IMR-90 (cell line): ENCODE measurements at regions of chr7 and their contacts with region 1.

Region 1: GRCh38 chr7:22776964-22777363 is 45.7 kb downstream of the TOMM7 start:
- DNase-seq: no peak
- ATAC-seq: no peak
- H3K4me3 ChIP-seq: no peak overlapping the region
- H3K27ac ChIP-seq: no peak overlapping the region
- H3K4me1 ChIP-seq: peaks cover 4% of the 10 kb centered on the region
- H3K27me3 ChIP-seq: no peaks in the 10 kb centered on the region
- CTCF ChIP-seq: no peak
- POLR2A ChIP-seq: no peak
- RAD21 ChIP-seq: no peak

Region 2: GRCh38 chr7:22743014-22743413 is 34.0 kb before region 1 on chr7:
- CTCF ChIA-PET with region 1: no interaction called
- POLR2A ChIA-PET with region 1: no interaction called
- dilution Hi-C with region 1: no loop called
- in situ Hi-C with region 1: no loop called
- intact Hi-C with region 1: loop called (anchors 5 kb)
- DNase-seq: no peak
- ATAC-seq: no peak
- H3K4me3 ChIP-seq: no peak overlapping the region
- H3K27ac ChIP-seq: no peak overlapping the region
- H3K4me1 ChIP-seq: no peaks in the 10 kb centered on the region
- H3K27me3 ChIP-seq: no peaks in the 10 kb centered on the region
- CTCF ChIP-seq: no peak
- POLR2A ChIP-seq: no peak
- RAD21 ChIP-seq: no peak

Region 3: GRCh38 chr7:22809902-22810642 is 33.1 kb after region 1 on chr7:
- CTCF ChIA-PET with region 1: no interaction called
- POLR2A ChIA-PET with region 1: no interaction called
- dilution Hi-C with region 1: no loop called
- in situ Hi-C with region 1: no loop called
- intact Hi-C with region 1: no loop called
- DNase-seq: no peak
- ATAC-seq: no peak
- H3K4me3 ChIP-seq: no peak overlapping the region
- H3K27ac ChIP-seq: no peak overlapping the region
- H3K4me1 ChIP-seq: peaks cover 3% of the 10 kb centered on the region; the same call in 1 of the 2 replicates
- H3K27me3 ChIP-seq: no peaks in the 10 kb centered on the region
- CTCF ChIP-seq: no peak
- POLR2A ChIP-seq: no peak
- RAD21 ChIP-seq: no peak